ENCODE measurements at regions of chr1 and their contacts with region 1.

Region 1: GRCh38 chr1:27858072-27858958 is 14.0 kb upstream of the THEMIS2 start:
- DNase-seq: peak; percentile 80
- H3K4me3 ChIP-seq: no peak overlapping the region
- H3K27ac ChIP-seq: no peak overlapping the region
- H3K4me1 ChIP-seq: peaks cover 11% of the 10 kb centered on the region
- CTCF ChIP-seq: peak; percentile 97

Region 2: GRCh38 chr1:27891196-27891889 is 33.0 kb after region 1 on chr1:
- CTCF ChIA-PET with region 1: no interaction called
- POLR2A ChIA-PET with region 1: no interaction called
- intact Hi-C with region 1: loop called (anchors 1 kb)
- DNase-seq: peak; percentile 64
- H3K4me3 ChIP-seq: peak overlapping the region; percentile 23
- H3K27ac ChIP-seq: peak overlapping the region; percentile 83
- H3K4me1 ChIP-seq: peaks cover 68% of the 10 kb centered on the region
- CTCF ChIP-seq: peak; percentile 57

Region 3: DNA sequence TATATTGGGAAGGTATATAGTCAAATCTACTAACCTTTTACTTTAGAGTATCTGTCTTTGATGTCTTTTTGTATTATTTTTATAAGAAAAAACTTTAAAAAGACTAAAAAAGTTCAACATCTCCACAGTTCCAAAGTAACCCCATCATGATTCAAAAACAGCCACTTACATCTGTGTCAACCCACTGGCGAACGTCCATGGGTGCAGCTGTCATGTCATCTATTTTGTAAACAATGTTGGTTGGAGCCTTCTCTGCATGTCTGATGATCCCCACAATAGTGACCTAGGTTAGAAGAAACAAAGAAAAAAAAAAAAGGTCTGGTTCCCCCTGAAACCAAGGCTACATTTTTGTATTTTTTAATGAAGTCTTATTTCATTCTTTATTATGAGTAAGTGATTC is 48.4 kb after region 1 on chr1:
- CTCF ChIA-PET with region 1: no interaction called
- POLR2A ChIA-PET with region 1: no interaction called
- intact Hi-C with region 1: no loop called
- DNase-seq: no peak
- H3K4me3 ChIP-seq: no peak overlapping the region
- H3K27ac ChIP-seq: no peak overlapping the region
- H3K4me1 ChIP-seq: no peaks in the 10 kb centered on the region
- CTCF ChIP-seq: no peak

Region 4: DNA sequence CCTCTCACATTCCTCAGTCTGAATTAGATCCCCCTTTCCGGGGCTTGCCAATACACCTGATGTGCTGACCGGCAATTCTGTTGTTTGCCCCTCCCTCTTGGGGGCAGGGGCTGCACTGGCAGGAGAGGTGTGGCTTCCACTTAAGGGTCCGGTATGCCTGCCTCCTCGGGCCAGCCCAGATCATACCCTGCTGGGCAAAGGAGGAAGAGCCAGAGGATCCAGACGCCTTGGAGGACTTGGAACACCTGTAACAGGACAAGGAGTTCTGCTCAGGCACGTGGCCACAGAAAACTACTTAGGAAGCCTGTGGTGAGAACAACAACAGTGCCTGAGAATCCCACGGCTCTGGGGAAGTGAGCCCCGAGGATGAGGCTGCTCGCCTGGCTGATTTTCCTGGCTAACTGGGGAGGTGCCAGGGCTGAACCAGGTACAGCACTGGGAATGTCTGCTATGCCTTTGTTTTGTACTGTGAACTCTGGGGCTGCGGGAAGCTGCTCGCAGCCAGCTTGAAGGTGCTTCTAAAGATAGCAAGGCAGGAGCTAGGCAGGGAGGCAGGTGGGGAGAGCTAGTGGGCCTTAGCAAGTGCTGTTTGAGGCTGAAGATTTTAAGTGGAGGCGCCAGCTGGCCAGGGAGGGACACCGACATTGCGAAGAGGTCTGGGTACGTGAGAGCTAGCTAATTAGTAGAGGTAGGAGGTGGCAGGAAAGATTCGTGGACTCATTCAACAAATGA is 76.7 kb after region 1 on chr1 and contains the start of gene SMPDL3B:
- CTCF ChIA-PET with region 1: no interaction called
- POLR2A ChIA-PET with region 1: no interaction called
- intact Hi-C with region 1: loop called (anchors 5 kb)
- DNase-seq: peak; percentile 21
- H3K4me3 ChIP-seq: peak within 1 kb of the TSS; percentile 34
- H3K27ac ChIP-seq: no peak within 1 kb of the TSS
- H3K4me1 ChIP-seq: peaks cover 27% of the 10 kb centered on the region
- CTCF ChIP-seq: no peak
- total RNA-seq, gene SMPDL3B: 0.19 and 0.39 TPM in 2 replicates

Region 5: GRCh38 chr1:27979151-27979858 is 121.0 kb after region 1 on chr1:
- CTCF ChIA-PET with region 1: interaction called, 3 read pairs
- POLR2A ChIA-PET with region 1: no interaction called
- intact Hi-C with region 1: loop called (anchors 1 kb)
- DNase-seq: peak; percentile 70
- H3K4me3 ChIP-seq: no peak overlapping the region
- H3K27ac ChIP-seq: no peak overlapping the region
- H3K4me1 ChIP-seq: no peaks in the 10 kb centered on the region
- CTCF ChIP-seq: peak; percentile 82

Region 6: GRCh38 chr1:28208818-28209441 is 350.6 kb after region 1 on chr1:
- CTCF ChIA-PET with region 1: no interaction called
- POLR2A ChIA-PET with region 1: no interaction called
- intact Hi-C with region 1: loop called (anchors 2 kb)
- DNase-seq: peak; percentile 82
- H3K4me3 ChIP-seq: no peak overlapping the region
- H3K27ac ChIP-seq: peak overlapping the region; percentile 17
- H3K4me1 ChIP-seq: peaks cover 9% of the 10 kb centered on the region
- CTCF ChIP-seq: peak; percentile 96

Measured in OCI-LY7 (cell line).